Naive thymus-derived CD4-positive, alpha-beta T cell (primary cell): ENCODE measurements at regions of chr1 and their contacts with region 1.

Region 1: GRCh38 chr1:116299248-116299915 is 73.7 kb upstream of the ATP1A1 start:
- DNase-seq: no peak
- ATAC-seq: no peak
- H3K4me3 ChIP-seq: no peak overlapping the region
- H3K4me3 Mint-ChIP-seq: peak overlapping the region in 1 of 10 donors; percentile 26
- H3K27ac ChIP-seq: no peak overlapping the region
- H3K27ac Mint-ChIP-seq: peak overlapping the region in 4 of 9 donors; percentile 4 to 26 (median 16)
- H3K4me1 ChIP-seq: no peaks in the 10 kb centered on the region
- H3K4me1 Mint-ChIP-seq: peaks cover 0 to 19% (median 11%) of the 10 kb centered on the region in 7 donors
- H3K27me3 ChIP-seq: no peaks in the 10 kb centered on the region
- H3K27me3 Mint-ChIP-seq: peaks cover 0 to 13% (median 0%) of the 10 kb centered on the region in 5 donors

Region 2: GRCh38 chr1:116194568-116195474 is 104.6 kb before region 1 on chr1:
- CTCF ChIA-PET with region 1: no interaction called
- POLR2A ChIA-PET with region 1: no interaction called
- intact Hi-C with region 1: no loop called
- DNase-seq: peak in 1 of 9 donors; percentile 3
- ATAC-seq: no peak
- H3K4me3 ChIP-seq: no peak overlapping the region
- H3K4me3 Mint-ChIP-seq: peak overlapping the region in 1 of 10 donors; percentile 21
- H3K27ac ChIP-seq: no peak overlapping the region
- H3K27ac Mint-ChIP-seq: peak overlapping the region in 4 of 9 donors; percentile 30 to 52 (median 33)
- H3K4me1 ChIP-seq: peaks cover 0 to 3% of the 10 kb centered on the region in 2 donors
- H3K4me1 Mint-ChIP-seq: peaks cover 0 to 14% (median 10%) of the 10 kb centered on the region in 7 donors
- H3K27me3 ChIP-seq: no peaks in the 10 kb centered on the region
- H3K27me3 Mint-ChIP-seq: peaks cover 0 to 37% (median 8%) of the 10 kb centered on the region in 5 donors

Region 3: DNA sequence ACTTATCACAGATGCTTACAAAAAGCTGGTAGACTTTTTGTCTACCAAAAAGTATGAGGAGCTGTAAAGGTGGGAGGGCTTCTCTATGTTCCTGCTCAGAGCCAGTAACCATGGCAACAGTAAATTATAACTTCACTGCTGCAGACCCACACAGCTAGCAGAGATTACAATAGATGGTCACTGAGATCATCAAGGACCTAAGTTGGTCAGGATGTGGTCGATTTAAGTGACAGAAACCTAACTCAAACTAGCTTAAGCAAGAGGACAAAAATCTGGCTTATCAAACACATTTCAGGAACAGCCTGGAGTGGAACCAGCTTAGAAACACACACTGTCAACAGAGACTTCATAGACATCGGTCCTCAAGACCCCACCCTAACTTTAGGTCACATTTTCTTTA is 39.7 kb before region 1 on chr1:
- CTCF ChIA-PET with region 1: interaction called, 3 read pairs
- POLR2A ChIA-PET with region 1: no interaction called
- intact Hi-C with region 1: loop called in 1 of 2 experiments (anchors 5 kb)
- DNase-seq: no peak
- ATAC-seq: peak; percentile 18
- H3K4me3 ChIP-seq: no peak overlapping the region
- H3K4me3 Mint-ChIP-seq: no peak overlapping the region
- H3K27ac ChIP-seq: no peak overlapping the region
- H3K27ac Mint-ChIP-seq: no peak overlapping the region
- H3K4me1 ChIP-seq: peaks cover 0 to 10% of the 10 kb centered on the region in 2 donors
- H3K4me1 Mint-ChIP-seq: peaks cover 14 to 39% (median 30%) of the 10 kb centered on the region in 7 donors
- H3K27me3 ChIP-seq: no peaks in the 10 kb centered on the region
- H3K27me3 Mint-ChIP-seq: no peaks in the 10 kb centered on the region